Psoas muscle (tissue), 8 donors: ENCODE measurements at regions of chr6 and their contacts with region 1.

Region 1: GRCh38 chr6:12233693-12234571 is 56.2 kb upstream of the EDN1 start:
- DNase-seq: no peak
- ATAC-seq: peak in 3 of 4 donors; percentile 49 to 77 (median 62)
- H3K4me3 ChIP-seq: no peak overlapping the region
- H3K27ac ChIP-seq: no peak overlapping the region
- H3K4me1 ChIP-seq: no peaks in the 10 kb centered on the region
- H3K27me3 ChIP-seq: no peaks in the 10 kb centered on the region
- CTCF ChIP-seq: peak; percentile 73

Region 2: DNA sequence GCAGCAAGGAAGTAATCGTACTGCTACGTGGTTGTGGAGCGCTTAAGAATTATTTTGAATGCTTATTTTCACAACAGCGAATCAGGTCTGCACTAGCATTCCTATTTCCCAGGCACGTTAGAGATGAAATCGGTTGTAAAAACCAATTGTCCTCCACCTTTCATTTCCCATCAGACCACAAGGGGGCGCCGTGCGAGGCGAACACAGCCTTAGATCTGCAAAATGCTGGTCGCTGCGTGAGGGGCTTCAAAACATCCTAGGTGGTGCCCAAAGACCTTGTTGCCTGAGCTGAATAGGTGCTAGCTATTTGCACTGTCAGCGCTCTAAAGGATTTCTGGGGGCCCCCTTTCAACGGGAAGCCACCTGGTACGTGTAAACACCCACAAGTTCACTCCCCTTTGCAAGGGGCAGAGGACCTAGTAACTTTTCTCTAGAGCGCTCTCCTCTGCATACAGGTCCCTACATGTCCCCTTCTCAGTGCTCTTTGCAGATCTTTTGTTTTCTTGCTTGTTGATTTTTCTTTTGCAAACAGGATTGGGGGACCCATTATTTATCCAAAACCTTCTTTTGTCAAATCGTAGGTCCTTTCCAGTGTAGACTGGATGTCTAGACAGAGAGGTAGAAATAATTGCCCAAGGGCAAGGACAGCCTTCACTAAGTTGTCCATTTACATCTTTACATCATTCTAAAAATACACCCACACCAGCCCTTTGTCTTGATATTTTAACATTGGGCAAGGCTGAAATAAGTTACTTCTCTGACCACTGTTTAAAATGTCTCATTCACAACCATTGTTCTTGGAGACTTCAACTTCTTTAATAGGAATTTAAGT is 1061.2 kb before region 1 on chr6:
- intact Hi-C with region 1: no loop called
- DNase-seq: peak; percentile 69 to 76
- ATAC-seq: peak in 1 of 4 donors; percentile 60
- H3K4me3 ChIP-seq: no peak overlapping the region
- H3K27ac ChIP-seq: no peak overlapping the region
- H3K4me1 ChIP-seq: no peaks in the 10 kb centered on the region
- H3K27me3 ChIP-seq: no peaks in the 10 kb centered on the region
- CTCF ChIP-seq: peak; percentile 80

Region 3: GRCh38 chr6:11585426-11586016 is 648.4 kb before region 1 on chr6:
- intact Hi-C with region 1: loop called (anchors 2 to 10 kb)
- DNase-seq: no peak
- ATAC-seq: peak in 1 of 4 donors; percentile 57
- H3K4me3 ChIP-seq: no peak overlapping the region
- H3K27ac ChIP-seq: no peak overlapping the region
- H3K4me1 ChIP-seq: peaks cover 5% of the 10 kb centered on the region
- H3K27me3 ChIP-seq: peaks cover 0 to 8% (median 0%) of the 10 kb centered on the region in 3 donors
- CTCF ChIP-seq: peak; percentile 57

Region 4: GRCh38 chr6:11653028-11653583 is 580.8 kb before region 1 on chr6:
- intact Hi-C with region 1: loop called (anchors 2 to 5 kb)
- DNase-seq: no peak
- ATAC-seq: peak in 3 of 4 donors; percentile 24 to 41 (median 40)
- H3K4me3 ChIP-seq: no peak overlapping the region
- H3K27ac ChIP-seq: no peak overlapping the region
- H3K4me1 ChIP-seq: peaks cover 14% of the 10 kb centered on the region
- H3K27me3 ChIP-seq: no peaks in the 10 kb centered on the region
- CTCF ChIP-seq: no peak

Region 5: GRCh38 chr6:11824986-11825385 is 408.9 kb before region 1 on chr6:
- intact Hi-C with region 1: loop called in 1 of 2 experiments (anchors 10 kb)
- DNase-seq: no peak
- ATAC-seq: no peak
- H3K4me3 ChIP-seq: no peak overlapping the region
- H3K27ac ChIP-seq: no peak overlapping the region
- H3K4me1 ChIP-seq: no peaks in the 10 kb centered on the region
- H3K27me3 ChIP-seq: no peaks in the 10 kb centered on the region
- CTCF ChIP-seq: no peak